ENCODE measurements at regions of chr1 and their contacts with region 1.

Region 1: GRCh38 chr1:54406339-54407153 is at the start of gene SSBP3:
- DNase-seq: peak; percentile 95
- ATAC-seq: peak; percentile 85 to 95 (median 91)
- H3K4me3 ChIP-seq: peak within 1 kb of the TSS; percentile 62
- H3K4me3 Mint-ChIP-seq: peak within 1 kb of the TSS; percentile 95
- H3K27ac ChIP-seq: peak within 1 kb of the TSS; percentile 71
- H3K27ac Mint-ChIP-seq: peak within 1 kb of the TSS; percentile 86 to 92
- H3K4me1 ChIP-seq: peaks cover 59% of the 10 kb centered on the region
- H3K4me1 Mint-ChIP-seq: peaks cover 65 to 67% of the 10 kb centered on the region in 2 donors
- H3K27me3 ChIP-seq: no peaks in the 10 kb centered on the region
- H3K27me3 Mint-ChIP-seq: no peaks in the 10 kb centered on the region
- CTCF ChIP-seq: no peak
- total RNA-seq, gene SSBP3: 162 to 224 (median 164) TPM

Region 2: DNA sequence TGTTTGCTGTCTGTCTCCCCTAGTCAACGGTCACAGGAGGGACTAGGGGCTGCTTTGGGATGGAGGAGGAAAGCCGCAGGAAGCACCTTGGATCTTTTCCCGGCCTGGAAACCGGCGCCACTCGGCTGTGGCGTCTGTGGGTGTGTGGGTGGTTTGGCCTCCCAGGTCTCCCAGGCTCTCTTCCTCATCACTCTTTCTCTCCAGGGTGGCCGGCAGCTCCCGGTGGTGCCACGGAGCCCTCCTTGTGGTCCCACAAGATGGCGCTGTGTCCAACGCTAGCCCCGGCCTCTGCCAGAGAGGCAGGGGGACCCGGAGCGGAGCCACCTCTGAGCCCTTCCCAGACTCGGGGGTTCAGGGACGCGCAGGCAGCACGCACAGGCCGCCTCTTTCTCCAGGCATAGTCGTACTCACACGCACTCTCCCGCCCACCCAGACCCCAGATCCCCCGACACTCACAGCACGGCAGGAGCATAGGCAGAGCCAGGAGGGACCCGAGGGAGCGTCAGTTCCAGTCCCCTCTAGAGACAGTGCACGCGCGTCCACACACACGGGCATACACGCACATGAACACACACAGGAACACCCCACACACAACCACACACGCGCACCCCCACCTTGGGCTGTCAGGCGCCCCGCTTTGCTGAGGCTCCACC is 284.9 kb before region 1 on chr1:
- intact Hi-C with region 1: loop called (anchors 10 kb)
- DNase-seq: peak; percentile 49 to 82
- ATAC-seq: peak; percentile 69 to 93 (median 91)
- H3K4me3 ChIP-seq: no peak overlapping the region
- H3K4me3 Mint-ChIP-seq: no peak overlapping the region
- H3K27ac ChIP-seq: no peak overlapping the region
- H3K27ac Mint-ChIP-seq: peak overlapping the region in 1 of 2 donors; percentile 31
- H3K4me1 ChIP-seq: peaks cover 9% of the 10 kb centered on the region
- H3K4me1 Mint-ChIP-seq: peaks cover 6 to 7% of the 10 kb centered on the region in 2 donors
- H3K27me3 ChIP-seq: no peaks in the 10 kb centered on the region
- H3K27me3 Mint-ChIP-seq: peaks cover 0 to 4% of the 10 kb centered on the region in 2 donors
- CTCF ChIP-seq: peak; percentile 37

Region 3: GRCh38 chr1:54167422-54168139 is 239.0 kb before region 1 on chr1:
- intact Hi-C with region 1: no loop called
- DNase-seq: no peak
- ATAC-seq: no peak
- H3K4me3 ChIP-seq: no peak overlapping the region
- H3K4me3 Mint-ChIP-seq: no peak overlapping the region
- H3K27ac ChIP-seq: no peak overlapping the region
- H3K27ac Mint-ChIP-seq: no peak overlapping the region
- H3K4me1 ChIP-seq: no peaks in the 10 kb centered on the region
- H3K4me1 Mint-ChIP-seq: no peaks in the 10 kb centered on the region
- H3K27me3 ChIP-seq: no peaks in the 10 kb centered on the region
- H3K27me3 Mint-ChIP-seq: no peaks in the 10 kb centered on the region
- CTCF ChIP-seq: no peak

Region 4: DNA sequence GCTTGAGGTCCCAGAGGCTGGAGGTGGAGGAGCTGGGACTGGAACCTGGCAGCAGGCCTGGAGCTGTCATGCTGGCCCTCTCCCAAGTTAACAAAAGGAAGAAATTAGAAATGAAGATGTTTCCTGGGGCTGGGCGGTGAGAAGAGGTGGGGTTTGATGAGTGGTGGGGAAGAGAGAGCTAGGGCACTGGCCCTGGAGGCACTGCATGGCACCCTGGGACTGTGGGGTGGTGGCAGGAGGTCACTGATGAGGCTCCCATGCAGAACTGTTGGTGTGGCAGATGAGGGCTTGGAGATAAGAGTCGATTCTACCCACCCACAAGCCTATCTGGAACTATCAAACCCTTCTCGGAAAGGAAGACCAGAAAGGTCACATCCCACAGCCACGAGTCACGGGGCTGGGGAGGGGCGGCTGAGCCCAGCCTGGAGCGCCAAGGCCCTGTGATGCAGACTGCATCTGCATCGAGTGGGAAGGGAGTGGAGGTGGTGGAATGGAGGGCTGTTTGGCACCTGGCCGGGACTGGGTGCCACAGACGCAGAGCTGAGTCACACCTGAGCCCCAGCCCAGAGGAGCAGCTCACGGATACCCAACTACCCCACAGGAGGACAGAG is 177.2 kb before region 1 on chr1:
- intact Hi-C with region 1: no loop called
- DNase-seq: no peak
- ATAC-seq: peak in 1 of 3 donors; percentile 53
- H3K4me3 ChIP-seq: no peak overlapping the region
- H3K4me3 Mint-ChIP-seq: peak overlapping the region; percentile 21
- H3K27ac ChIP-seq: no peak overlapping the region
- H3K27ac Mint-ChIP-seq: peak overlapping the region in 1 of 2 donors; percentile 67
- H3K4me1 ChIP-seq: peaks cover 11% of the 10 kb centered on the region
- H3K4me1 Mint-ChIP-seq: peaks cover 21 to 36% of the 10 kb centered on the region in 2 donors
- H3K27me3 ChIP-seq: no peaks in the 10 kb centered on the region
- H3K27me3 Mint-ChIP-seq: no peaks in the 10 kb centered on the region
- CTCF ChIP-seq: no peak

Region 5: DNA sequence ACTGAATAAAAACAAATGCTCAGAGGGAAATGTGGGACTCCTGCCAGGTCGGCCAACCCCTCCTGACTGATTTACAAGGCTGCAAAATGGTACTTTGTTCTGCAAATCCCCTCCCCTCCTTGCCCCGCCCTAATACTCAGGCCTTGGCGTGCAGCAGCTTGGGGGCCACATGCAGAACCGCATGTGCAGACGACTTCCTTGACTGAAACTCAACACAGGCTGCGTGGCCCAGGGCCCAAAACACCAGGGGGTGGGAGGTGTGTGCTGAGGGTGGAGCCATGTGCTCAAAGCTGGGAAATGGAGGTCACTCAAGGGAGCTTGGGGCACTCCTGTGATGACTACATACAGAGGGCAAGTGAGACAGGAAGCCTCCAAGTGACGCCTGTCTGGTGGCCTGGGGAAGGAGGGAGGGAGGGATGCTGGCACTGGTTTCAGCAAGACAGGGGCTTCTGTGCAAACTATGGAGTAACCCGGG is 119.3 kb before region 1 on chr1:
- intact Hi-C with region 1: loop called (anchors 1 kb)
- DNase-seq: peak; percentile 40 to 80
- ATAC-seq: peak; percentile 79 to 86 (median 85)
- H3K4me3 ChIP-seq: no peak overlapping the region
- H3K4me3 Mint-ChIP-seq: peak overlapping the region; percentile 51
- H3K27ac ChIP-seq: peak overlapping the region; percentile 45
- H3K27ac Mint-ChIP-seq: peak overlapping the region; percentile 72 to 96
- H3K4me1 ChIP-seq: peaks cover 85% of the 10 kb centered on the region
- H3K4me1 Mint-ChIP-seq: peaks cover 88 to 89% of the 10 kb centered on the region in 2 donors
- H3K27me3 ChIP-seq: no peaks in the 10 kb centered on the region
- H3K27me3 Mint-ChIP-seq: no peaks in the 10 kb centered on the region
- CTCF ChIP-seq: no peak

Region 6: DNA sequence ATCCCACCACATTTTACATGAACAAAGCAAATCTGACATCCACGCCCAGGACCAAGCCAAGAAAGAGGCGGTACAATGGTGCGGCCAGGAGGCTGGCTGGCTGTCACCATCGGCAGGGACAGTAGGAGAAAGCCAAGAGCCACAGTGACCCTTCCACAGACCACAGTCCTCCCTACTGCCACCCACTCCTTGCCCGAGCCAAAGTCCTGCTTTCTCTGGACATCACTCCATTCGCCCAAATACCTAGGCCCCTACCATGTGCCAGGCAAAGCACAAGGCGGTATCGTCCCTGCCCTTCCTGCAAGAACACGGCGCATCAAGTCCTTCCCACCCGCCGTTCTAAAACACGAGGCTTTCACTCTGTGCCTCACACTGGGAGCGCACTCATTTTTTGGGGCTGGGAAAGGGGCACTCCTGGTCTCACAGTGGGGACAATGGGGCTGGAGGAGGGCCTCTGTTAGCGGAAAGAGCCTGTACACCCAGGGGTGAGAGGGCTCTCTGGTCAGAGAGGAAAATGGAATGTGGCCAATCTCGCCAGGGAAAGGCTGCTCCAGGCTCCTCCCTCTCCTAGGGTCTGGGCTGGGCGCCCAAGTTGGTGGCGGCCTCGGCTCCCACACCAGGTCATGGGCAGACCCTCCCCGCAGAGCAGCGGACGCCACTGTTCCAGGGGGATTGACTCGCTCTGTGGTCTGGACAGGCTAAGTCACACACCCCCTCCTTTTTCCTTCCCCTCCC is 26.8 kb before region 1 on chr1:
- intact Hi-C with region 1: loop called (anchors 2 kb)
- DNase-seq: no peak
- ATAC-seq: no peak
- H3K4me3 ChIP-seq: no peak overlapping the region
- H3K4me3 Mint-ChIP-seq: peak overlapping the region; percentile 78
- H3K27ac ChIP-seq: no peak overlapping the region
- H3K27ac Mint-ChIP-seq: peak overlapping the region; percentile 74 to 86
- H3K4me1 ChIP-seq: peaks cover 74% of the 10 kb centered on the region
- H3K4me1 Mint-ChIP-seq: peaks cover 89 to 92% of the 10 kb centered on the region in 2 donors
- H3K27me3 ChIP-seq: no peaks in the 10 kb centered on the region
- H3K27me3 Mint-ChIP-seq: no peaks in the 10 kb centered on the region
- CTCF ChIP-seq: no peak

Region 7: GRCh38 chr1:54715493-54716298 is 309.1 kb after region 1 on chr1 and contains the start of gene TTC4:
- intact Hi-C with region 1: loop called (anchors 5 kb)
- DNase-seq: peak; percentile 84 to 92
- ATAC-seq: peak; percentile 97 to 98 (median 98)
- H3K4me3 ChIP-seq: peak within 1 kb of the TSS; percentile 91
- H3K4me3 Mint-ChIP-seq: peak within 1 kb of the TSS; percentile 86
- H3K27ac ChIP-seq: peak within 1 kb of the TSS; percentile 56
- H3K27ac Mint-ChIP-seq: peak within 1 kb of the TSS; percentile 76 to 79
- H3K4me1 ChIP-seq: peaks cover 12% of the 10 kb centered on the region
- H3K4me1 Mint-ChIP-seq: peaks cover 25 to 29% of the 10 kb centered on the region in 2 donors
- H3K27me3 ChIP-seq: no peaks in the 10 kb centered on the region
- H3K27me3 Mint-ChIP-seq: peaks cover 3 to 5% of the 10 kb centered on the region in 2 donors
- CTCF ChIP-seq: no peak
- total RNA-seq, gene TTC4: 7.8 to 13.6 (median 10.0) TPM

Measured in natural killer cell (primary cell).